Caco-2 (cell line): ENCODE measurements at regions of chr3 and their contacts with region 1.

Region 1: GRCh38 chr3:50587806-50588758 is 18.8 kb downstream of the HEMK1 start:
- DNase-seq: no peak
- H3K4me3 ChIP-seq: no peak overlapping the region
- H3K4me3 Mint-ChIP-seq: no peak overlapping the region
- H3K27ac Mint-ChIP-seq: no peak overlapping the region
- H3K4me1 ChIP-seq: peaks cover 25% of the 10 kb centered on the region
- H3K4me1 Mint-ChIP-seq: peaks cover 17% of the 10 kb centered on the region
- H3K27me3 ChIP-seq: no peaks in the 10 kb centered on the region
- H3K27me3 Mint-ChIP-seq: no peaks in the 10 kb centered on the region
- CTCF ChIP-seq: no peak

Region 2: DNA sequence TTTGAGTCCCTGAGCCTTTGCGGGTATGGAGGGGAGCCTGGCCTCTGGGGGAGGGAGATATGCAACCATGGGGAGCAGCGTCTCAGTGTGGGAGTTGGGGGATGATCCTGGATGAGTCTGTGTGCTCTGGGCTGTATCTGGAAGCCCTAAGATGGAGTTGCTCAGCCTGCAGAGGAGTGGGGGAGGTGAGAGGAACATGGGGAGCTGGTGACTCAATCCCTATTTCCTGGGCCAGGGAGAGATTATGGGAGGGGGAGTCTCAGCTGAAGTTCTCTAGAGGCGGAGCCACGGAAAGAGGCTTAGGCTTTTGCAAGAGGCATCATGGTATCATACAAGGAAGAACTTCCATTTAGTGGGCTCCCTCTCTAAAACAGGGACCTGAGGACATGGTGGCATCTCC is 169.2 kb before region 1 on chr3:
- CTCF ChIA-PET with region 1: no interaction called
- POLR2A ChIA-PET with region 1: no interaction called
- intact Hi-C with region 1: no loop called
- DNase-seq: no peak
- H3K4me3 ChIP-seq: no peak overlapping the region
- H3K4me3 Mint-ChIP-seq: no peak overlapping the region
- H3K27ac Mint-ChIP-seq: no peak overlapping the region
- H3K4me1 ChIP-seq: no peaks in the 10 kb centered on the region
- H3K4me1 Mint-ChIP-seq: no peaks in the 10 kb centered on the region
- H3K27me3 ChIP-seq: no peaks in the 10 kb centered on the region; the same call in none of the 2 replicates
- H3K27me3 Mint-ChIP-seq: peaks cover 4% of the 10 kb centered on the region
- CTCF ChIP-seq: no peak

Region 3: GRCh38 chr3:50600841-50601591 is 12.9 kb after region 1 on chr3:
- CTCF ChIA-PET with region 1: no interaction called
- POLR2A ChIA-PET with region 1: interaction called, 5 read pairs
- intact Hi-C with region 1: loop called (anchors 2 kb)
- DNase-seq: peak; percentile 87 to 93
- H3K4me3 ChIP-seq: no peak overlapping the region
- H3K4me3 Mint-ChIP-seq: peak overlapping the region; percentile 70
- H3K27ac Mint-ChIP-seq: peak overlapping the region; percentile 98
- H3K4me1 ChIP-seq: peaks cover 37% of the 10 kb centered on the region
- H3K4me1 Mint-ChIP-seq: peaks cover 20% of the 10 kb centered on the region
- H3K27me3 ChIP-seq: no peaks in the 10 kb centered on the region
- H3K27me3 Mint-ChIP-seq: no peaks in the 10 kb centered on the region
- CTCF ChIP-seq: no peak

Region 4: DNA sequence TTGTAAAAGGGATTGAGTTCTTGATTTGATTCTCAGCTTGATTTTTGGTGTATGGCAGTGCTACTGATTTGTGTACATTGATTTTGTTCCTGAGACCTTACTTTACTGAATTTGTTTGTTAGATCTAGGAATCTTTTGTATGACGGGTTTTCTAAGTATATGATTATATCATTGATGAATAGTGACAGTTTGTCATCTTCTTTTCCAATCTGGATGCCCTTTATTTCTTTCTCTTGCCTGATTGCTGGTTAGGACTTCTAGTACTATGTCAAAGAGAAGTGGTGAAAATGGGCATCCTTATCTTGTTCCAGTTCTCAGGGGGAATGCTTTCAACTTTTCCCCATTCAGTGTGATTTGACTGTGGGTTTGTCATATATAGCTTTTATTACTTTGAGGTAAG is 189.6 kb after region 1 on chr3:
- CTCF ChIA-PET with region 1: no interaction called
- POLR2A ChIA-PET with region 1: no interaction called
- intact Hi-C with region 1: no loop called
- DNase-seq: no peak
- H3K4me3 ChIP-seq: no peak overlapping the region
- H3K4me3 Mint-ChIP-seq: no peak overlapping the region
- H3K27ac Mint-ChIP-seq: no peak overlapping the region
- H3K4me1 ChIP-seq: no peaks in the 10 kb centered on the region
- H3K4me1 Mint-ChIP-seq: no peaks in the 10 kb centered on the region
- H3K27me3 ChIP-seq: no peaks in the 10 kb centered on the region
- H3K27me3 Mint-ChIP-seq: peaks cover 7% of the 10 kb centered on the region
- CTCF ChIP-seq: no peak